ENCODE measurements at regions of chr21 and their contacts with region 1.

Region 1: DNA sequence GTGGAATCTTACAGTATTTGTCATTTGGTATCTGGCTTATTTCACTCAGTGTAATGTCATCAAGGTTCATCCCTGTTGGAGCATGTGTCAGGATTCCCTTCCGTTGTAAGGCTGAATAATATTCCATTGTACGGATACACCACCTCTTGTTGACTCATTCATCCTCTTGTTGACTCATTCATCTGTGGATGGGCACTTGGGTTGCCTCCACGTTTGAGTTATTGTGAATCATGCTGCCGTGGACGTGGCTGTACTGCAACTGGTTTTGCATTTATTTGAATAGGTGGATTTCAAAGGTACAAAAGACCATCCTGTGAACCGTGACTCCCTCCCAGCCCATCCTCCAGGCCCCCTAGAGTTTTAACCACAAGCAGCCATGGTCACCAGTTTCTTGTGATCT is 11.9 kb upstream of the TCP10L start:
- DNase-seq: no peak
- ATAC-seq: no peak
- H3K4me3 Mint-ChIP-seq: no peak overlapping the region
- H3K27ac Mint-ChIP-seq: no peak overlapping the region
- H3K4me1 Mint-ChIP-seq: peaks cover 22% of the 10 kb centered on the region
- H3K27me3 Mint-ChIP-seq: no peaks in the 10 kb centered on the region; the same call in 1 of the 2 replicates
- CTCF ChIP-seq: no peak

Region 2: DNA sequence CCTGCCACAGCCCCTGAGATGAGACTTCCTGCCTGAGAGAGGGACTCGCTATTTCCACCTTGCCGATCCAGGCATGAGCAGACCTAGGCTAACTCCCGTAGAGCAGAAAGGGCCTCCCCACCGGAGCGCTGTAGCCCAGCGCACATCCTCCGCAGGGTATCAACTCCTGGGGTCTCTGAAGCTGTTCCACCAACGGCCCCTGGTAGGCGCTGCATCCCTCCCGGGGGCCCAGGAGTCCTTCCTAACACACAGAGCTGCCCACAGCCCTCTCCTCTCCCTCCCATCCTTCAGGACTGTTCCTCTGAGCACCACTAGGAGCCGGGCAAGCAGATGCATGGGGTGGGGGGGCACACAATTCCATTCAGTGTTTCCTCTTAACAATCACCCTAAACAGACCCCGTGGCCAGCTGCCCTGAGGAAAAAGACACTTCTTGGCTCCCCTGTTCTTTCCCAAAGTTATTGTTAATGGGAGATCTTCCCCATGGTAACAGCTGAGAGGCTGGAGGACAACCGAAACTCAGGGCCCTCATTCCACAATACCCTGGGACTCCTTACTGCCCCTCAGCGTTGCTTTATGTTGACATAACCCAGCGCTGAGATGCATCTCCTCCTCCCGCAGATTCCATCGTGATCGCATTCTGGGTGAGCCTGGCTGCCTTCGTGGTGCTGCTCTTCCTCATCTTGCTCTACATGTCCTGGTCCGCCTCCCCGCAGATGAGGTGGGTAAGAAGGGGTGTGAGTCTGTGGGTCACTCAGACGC is 291.0 kb before region 1 on chr21:
- CTCF ChIA-PET with region 1: interaction called, 15 read pairs
- POLR2A ChIA-PET with region 1: no interaction called
- DNase-seq: peak; percentile 91
- ATAC-seq: peak; percentile 98
- H3K4me3 Mint-ChIP-seq: peak overlapping the region; percentile 8; the same call in 1 of the 2 replicates
- H3K27ac Mint-ChIP-seq: peak overlapping the region; percentile 54
- H3K4me1 Mint-ChIP-seq: peaks cover 16% of the 10 kb centered on the region
- H3K27me3 Mint-ChIP-seq: no peaks in the 10 kb centered on the region
- CTCF ChIP-seq: peak; percentile 74

Region 3: GRCh38 chr21:32386195-32386870 is 210.9 kb before region 1 on chr21:
- CTCF ChIA-PET with region 1: interaction called, 12 read pairs
- POLR2A ChIA-PET with region 1: no interaction called
- DNase-seq: no peak
- ATAC-seq: no peak
- H3K4me3 Mint-ChIP-seq: no peak overlapping the region
- H3K27ac Mint-ChIP-seq: no peak overlapping the region
- H3K4me1 Mint-ChIP-seq: peaks cover 31% of the 10 kb centered on the region
- H3K27me3 Mint-ChIP-seq: no peaks in the 10 kb centered on the region
- CTCF ChIP-seq: no peak

Region 4: DNA sequence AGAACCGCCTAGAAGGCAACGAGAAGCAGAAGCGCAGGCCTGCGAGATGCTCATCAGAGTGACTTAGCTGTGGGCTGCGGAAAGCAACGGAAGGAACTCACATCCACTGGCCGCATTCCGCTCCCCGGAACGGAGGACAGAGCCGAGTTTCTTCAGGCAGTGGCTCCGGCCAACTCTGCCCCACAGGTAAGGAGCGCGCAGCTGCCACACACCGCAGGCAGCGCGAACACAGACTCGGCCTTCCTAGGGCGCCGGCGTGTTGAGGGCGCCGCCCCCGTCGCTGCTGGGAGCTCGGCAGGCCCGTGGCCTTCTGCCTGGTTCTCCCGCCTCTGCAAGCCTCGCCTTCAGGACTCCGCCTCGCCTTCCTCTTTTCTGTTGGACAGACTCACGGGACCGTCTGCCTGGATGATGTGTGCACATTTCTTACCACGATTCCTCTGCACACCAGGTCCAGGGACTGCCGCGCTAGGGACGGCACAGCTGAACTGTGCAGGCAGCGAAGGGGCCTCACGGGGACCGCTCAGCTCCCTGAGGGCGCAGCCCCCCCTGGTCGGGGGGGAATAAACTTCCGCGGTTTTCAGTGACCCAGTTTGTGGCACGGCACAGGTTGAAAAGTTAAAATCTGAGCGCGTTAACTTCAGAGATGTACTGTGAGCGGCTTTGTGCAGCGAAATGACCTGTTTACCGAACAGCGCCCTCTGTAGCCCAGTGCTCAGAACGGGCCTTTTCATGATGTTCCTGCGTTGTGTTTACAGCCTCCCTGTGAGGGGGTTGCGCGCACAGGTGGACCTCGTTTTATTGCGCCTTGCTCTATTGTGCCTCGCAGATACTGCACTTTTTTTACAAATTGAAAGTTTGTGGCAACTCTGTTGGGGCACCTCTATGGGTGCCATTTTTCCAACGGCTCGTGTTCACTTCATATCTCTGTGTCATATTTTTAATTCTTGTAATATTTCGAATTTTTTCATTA is 27.7 kb before region 1 on chr21:
- CTCF ChIA-PET with region 1: interaction called, 47 read pairs
- POLR2A ChIA-PET with region 1: no interaction called
- DNase-seq: peak; percentile 88
- ATAC-seq: peak; percentile 88
- H3K4me3 Mint-ChIP-seq: peak overlapping the region; percentile 90
- H3K27ac Mint-ChIP-seq: 0 out of 2 replicates have a peak overlapping the region, but pooled peaks have one; percentile 64
- H3K4me1 Mint-ChIP-seq: peaks cover 40% of the 10 kb centered on the region
- H3K27me3 Mint-ChIP-seq: no peaks in the 10 kb centered on the region; the same call in 1 of the 2 replicates
- CTCF ChIP-seq: peak; percentile 74

Region 5: GRCh38 chr21:32578107-32578692 is 19.0 kb before region 1 on chr21:
- CTCF ChIA-PET with region 1: interaction called, 47 read pairs
- POLR2A ChIA-PET with region 1: no interaction called
- DNase-seq: peak; percentile 72
- ATAC-seq: peak; percentile 94
- H3K4me3 Mint-ChIP-seq: no peak overlapping the region
- H3K27ac Mint-ChIP-seq: no peak overlapping the region
- H3K4me1 Mint-ChIP-seq: peaks cover 8% of the 10 kb centered on the region
- H3K27me3 Mint-ChIP-seq: no peaks in the 10 kb centered on the region
- CTCF ChIP-seq: peak; percentile 52; the same call in 1 of the 2 replicates

Region 6: GRCh38 chr21:32587120-32587519 is 10.1 kb before region 1 on chr21:
- CTCF ChIA-PET with region 1: interaction called, 22 read pairs
- POLR2A ChIA-PET with region 1: no interaction called
- DNase-seq: no peak
- ATAC-seq: no peak
- H3K4me3 Mint-ChIP-seq: no peak overlapping the region
- H3K27ac Mint-ChIP-seq: no peak overlapping the region
- H3K4me1 Mint-ChIP-seq: peaks cover 5% of the 10 kb centered on the region
- H3K27me3 Mint-ChIP-seq: no peaks in the 10 kb centered on the region
- CTCF ChIP-seq: no peak

Region 7: DNA sequence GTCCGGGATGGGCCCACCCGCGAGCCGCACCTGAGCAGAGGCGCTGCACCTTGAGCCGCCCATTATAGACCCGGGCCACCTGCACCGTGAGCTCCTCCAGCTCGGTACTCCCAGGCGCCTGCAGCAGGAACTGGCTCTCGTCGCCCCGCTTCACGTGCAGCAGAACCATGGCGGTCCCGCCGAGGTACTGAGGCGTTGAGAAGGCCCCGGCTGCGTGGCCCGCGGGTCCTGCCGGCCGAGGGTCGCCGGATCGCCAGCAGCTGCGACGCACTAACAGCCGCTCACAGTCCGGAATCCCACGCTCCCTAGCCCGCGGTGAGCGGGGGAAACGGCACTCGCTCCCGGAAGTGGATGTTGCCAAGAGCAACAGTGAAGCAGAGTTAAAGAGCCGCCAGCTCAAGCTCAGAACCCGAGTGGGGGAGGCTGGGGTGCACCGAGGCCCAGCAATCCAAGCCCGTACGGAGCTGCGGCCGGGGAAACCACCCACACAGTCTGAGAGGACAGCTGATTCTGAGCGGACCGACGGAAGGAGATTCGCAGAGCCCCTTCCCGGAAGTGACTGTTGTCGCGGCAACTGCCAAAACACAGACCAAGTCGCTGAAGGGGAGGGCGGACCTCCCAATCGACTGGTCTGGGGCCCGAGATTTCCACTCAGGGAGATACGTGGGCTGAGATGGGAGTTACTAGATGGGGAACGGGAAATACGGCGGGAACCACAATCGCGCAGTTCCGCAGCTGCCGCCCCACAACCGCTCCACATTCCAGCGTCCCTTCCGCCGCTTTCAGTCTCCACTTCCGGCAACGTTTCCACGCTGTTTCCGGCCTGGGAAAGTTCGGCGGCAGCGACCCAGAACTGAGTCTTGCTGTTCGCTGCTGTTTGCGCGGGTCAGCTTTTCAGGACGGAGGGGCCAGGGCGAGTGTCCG is 15.1 kb after region 1 on chr21 and contains the start of gene CFAP298:
- CTCF ChIA-PET with region 1: interaction called, 31 read pairs
- POLR2A ChIA-PET with region 1: interaction called, 13 read pairs
- DNase-seq: peak; percentile 80
- ATAC-seq: peak; percentile 89
- H3K4me3 Mint-ChIP-seq: peak within 1 kb of the TSS; percentile 95
- H3K27ac Mint-ChIP-seq: peak within 1 kb of the TSS; percentile 93
- H3K4me1 Mint-ChIP-seq: peaks cover 14% of the 10 kb centered on the region
- H3K27me3 Mint-ChIP-seq: peaks cover 2% of the 10 kb centered on the region
- CTCF ChIP-seq: no peak
- total RNA-seq, gene CFAP298: 80.3 to 98.1 TPM (median 85.1 TPM) in 3 replicates

Region 8: DNA sequence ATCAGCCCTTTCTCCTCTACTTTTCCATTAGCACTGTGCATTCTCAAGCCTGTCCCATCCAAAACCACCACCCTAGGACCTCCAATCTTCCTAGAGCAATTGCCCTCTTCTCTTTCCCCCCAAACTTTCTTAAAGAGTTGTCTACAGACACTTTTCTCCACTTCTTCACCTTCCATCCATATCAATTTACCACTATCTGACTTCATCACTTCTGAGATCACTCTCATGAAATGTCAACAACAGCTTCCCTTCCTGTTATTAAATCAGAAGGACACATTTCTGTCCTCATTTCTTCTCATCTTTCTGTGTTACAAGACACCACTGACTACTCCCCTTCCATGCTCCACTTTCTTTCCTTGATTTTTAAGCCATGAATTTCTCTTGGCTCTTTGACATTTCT is 51.0 kb after region 1 on chr21:
- CTCF ChIA-PET with region 1: no interaction called
- POLR2A ChIA-PET with region 1: no interaction called
- DNase-seq: no peak
- ATAC-seq: no peak
- H3K4me3 Mint-ChIP-seq: no peak overlapping the region
- H3K27ac Mint-ChIP-seq: no peak overlapping the region
- H3K4me1 Mint-ChIP-seq: peaks cover 25% of the 10 kb centered on the region
- H3K27me3 Mint-ChIP-seq: no peaks in the 10 kb centered on the region
- CTCF ChIP-seq: no peak

Region 9: GRCh38 chr21:32757804-32758203 is 160.6 kb after region 1 on chr21:
- CTCF ChIA-PET with region 1: no interaction called
- POLR2A ChIA-PET with region 1: no interaction called
- DNase-seq: no peak
- ATAC-seq: no peak
- H3K4me3 Mint-ChIP-seq: no peak overlapping the region
- H3K27ac Mint-ChIP-seq: no peak overlapping the region
- H3K4me1 Mint-ChIP-seq: peaks cover 13% of the 10 kb centered on the region
- H3K27me3 Mint-ChIP-seq: no peaks in the 10 kb centered on the region
- CTCF ChIP-seq: no peak